Common myeloid progenitor, CD34-positive (primary cell): ENCODE measurements at regions of chr10 and their contacts with region 1.

Region 1: DNA sequence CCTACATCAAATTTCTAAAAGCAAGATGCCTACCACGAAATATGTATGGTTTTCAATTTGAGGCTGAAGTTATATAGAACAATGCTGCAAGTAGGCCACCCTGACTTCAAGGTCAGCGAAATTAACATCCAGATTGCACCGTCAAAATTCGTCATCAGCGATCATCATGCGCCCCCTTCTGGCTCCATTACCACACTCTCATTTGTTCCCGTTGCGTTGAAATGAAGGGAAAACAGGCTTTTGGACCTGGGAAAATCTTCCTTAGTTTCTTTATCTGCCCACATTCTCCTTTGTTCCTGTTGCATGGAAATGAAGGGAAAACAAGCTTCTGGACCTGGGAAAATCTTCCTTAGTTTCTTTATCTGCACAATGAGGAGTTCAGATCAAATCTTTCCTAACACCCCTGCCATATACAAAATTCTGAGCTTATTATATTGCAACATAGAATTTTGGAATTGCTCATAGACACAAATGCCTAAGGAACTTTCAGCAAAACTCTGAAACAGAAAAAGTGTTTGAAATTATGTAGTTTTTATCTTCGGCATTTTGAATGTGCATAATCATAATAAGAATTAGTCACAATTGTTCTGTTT is 98.2 kb upstream of the PRKCQ start:
- DNase-seq: peak; percentile 60 to 67 (median 64)
- H3K4me3 ChIP-seq: no peak overlapping the region
- H3K27ac ChIP-seq: no peak overlapping the region
- H3K4me1 ChIP-seq: peaks cover 0 to 4% (median 0%) of the 10 kb centered on the region in 4 experiments
- H3K27me3 ChIP-seq: no peaks in the 10 kb centered on the region

Region 2: GRCh38 chr10:6416892-6417512 is 261.3 kb before region 1 on chr10:
- CTCF ChIA-PET with region 1: interaction called, 49 read pairs
- POLR2A ChIA-PET with region 1: no interaction called
- DNase-seq: peak; percentile 59 to 68 (median 59)
- H3K4me3 ChIP-seq: no peak overlapping the region
- H3K27ac ChIP-seq: no peak overlapping the region
- H3K4me1 ChIP-seq: no peaks in the 10 kb centered on the region
- H3K27me3 ChIP-seq: no peaks in the 10 kb centered on the region

Region 3: DNA sequence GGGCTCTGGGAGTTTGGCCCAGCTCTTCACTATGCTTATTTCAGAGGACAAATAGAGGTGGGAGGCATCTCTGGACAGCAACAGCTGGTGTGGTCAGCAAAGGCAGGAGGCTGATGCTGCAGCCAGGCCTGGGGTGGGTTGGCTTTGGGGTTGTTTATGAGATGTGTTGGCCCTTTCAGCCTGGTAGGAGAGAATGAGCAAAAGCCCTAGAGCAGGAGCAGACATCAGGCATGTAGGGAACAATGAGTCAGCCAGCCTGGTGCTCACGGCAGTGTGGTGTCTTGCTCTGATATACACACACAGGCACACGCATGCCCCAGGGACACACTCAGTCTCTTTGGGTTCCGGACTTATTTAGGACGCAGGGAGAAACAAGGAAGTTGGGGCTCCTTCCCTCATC is 255.3 kb before region 1 on chr10:
- CTCF ChIA-PET with region 1: interaction called, 49 read pairs
- POLR2A ChIA-PET with region 1: no interaction called
- DNase-seq: no peak
- H3K4me3 ChIP-seq: no peak overlapping the region
- H3K27ac ChIP-seq: no peak overlapping the region
- H3K4me1 ChIP-seq: no peaks in the 10 kb centered on the region
- H3K27me3 ChIP-seq: no peaks in the 10 kb centered on the region